ENCODE measurements at regions of chr10 and their contacts with region 1.

Region 1: GRCh38 chr10:90912174-90912573 is 8.7 kb downstream of the ANKRD1 start:
- H3K4me3 ChIP-seq: no peak overlapping the region
- H3K27ac ChIP-seq: no peak overlapping the region
- H3K4me1 ChIP-seq: no peaks in the 10 kb centered on the region
- CTCF ChIP-seq: no peak

Region 2: GRCh38 chr10:90930070-90930837 is 18.1 kb after region 1 on chr10:
- CTCF ChIA-PET with region 1: interaction called, 4 read pairs
- POLR2A ChIA-PET with region 1: interaction called, 10 read pairs
- H3K4me3 ChIP-seq: no peak overlapping the region
- H3K27ac ChIP-seq: no peak overlapping the region; the same call in 1 of the 2 replicates
- H3K4me1 ChIP-seq: 0 out of 2 replicates have a peak, but pooled peaks cover 3% of the 10 kb centered on the region
- CTCF ChIP-seq: no peak

Region 3: DNA sequence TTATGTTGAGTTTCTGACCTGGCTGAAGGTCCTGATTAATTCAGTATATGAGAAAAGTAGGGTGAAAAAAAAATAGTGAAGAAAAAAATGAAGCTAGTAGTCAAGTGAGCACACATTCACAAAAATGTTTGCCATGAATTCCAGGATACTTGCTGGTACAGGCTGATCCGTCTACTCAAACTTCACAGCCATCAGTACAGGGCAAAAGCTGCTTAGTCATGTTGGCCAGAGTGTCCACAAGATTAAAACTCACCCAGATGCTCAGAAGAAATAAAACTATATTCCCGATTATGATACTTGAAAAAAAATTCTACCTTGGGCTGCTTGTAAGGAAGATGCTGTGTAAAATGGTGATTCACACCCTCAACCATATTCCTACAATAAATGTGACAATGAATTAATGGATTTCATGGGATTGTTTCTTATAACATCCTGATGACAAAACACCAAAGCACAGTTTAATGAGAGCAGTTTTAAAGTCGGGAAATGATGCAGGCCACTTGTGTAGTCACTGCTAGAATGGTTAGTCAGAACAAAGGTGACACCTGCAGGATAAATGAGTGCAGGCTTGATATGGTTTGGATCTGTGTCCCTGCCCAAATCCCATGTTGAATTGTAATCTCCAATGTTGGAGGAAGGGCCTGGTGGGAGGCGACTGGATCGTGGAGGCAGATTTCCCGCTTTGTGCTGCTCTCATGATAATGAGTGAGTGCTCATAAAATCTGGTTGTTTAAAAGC is 57.9 kb after region 1 on chr10:
- CTCF ChIA-PET with region 1: interaction called, 38 read pairs
- POLR2A ChIA-PET with region 1: interaction called, 17 read pairs
- H3K4me3 ChIP-seq: no peak overlapping the region
- H3K27ac ChIP-seq: no peak overlapping the region
- H3K4me1 ChIP-seq: peaks cover 8% of the 10 kb centered on the region; the same call in 1 of the 2 replicates
- CTCF ChIP-seq: no peak

Region 4: DNA sequence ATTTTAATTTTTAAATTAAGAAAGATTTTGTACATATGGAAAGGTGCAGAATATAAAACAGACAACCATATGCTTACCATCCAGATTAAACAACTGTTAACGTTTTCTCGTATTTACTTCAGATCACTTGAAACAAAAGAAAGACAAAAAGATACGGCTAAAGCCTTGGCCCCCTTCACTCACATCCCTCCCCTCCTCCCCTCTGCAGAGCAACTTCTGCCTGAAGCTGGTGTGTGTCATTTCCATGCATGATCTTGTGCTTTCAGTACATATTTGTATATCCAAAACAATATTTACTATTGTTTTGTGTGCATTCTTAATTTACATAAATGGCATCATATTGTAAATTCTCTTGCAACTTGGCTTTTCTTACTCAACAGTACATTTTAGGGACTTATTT is 77.2 kb after region 1 on chr10:
- CTCF ChIA-PET with region 1: no interaction called
- POLR2A ChIA-PET with region 1: no interaction called
- H3K4me3 ChIP-seq: no peak overlapping the region
- H3K27ac ChIP-seq: no peak overlapping the region
- H3K4me1 ChIP-seq: 0 out of 2 replicates have a peak, but pooled peaks cover 2% of the 10 kb centered on the region
- CTCF ChIP-seq: no peak

Region 5: GRCh38 chr10:91000984-91001383 is 88.8 kb after region 1 on chr10:
- CTCF ChIA-PET with region 1: interaction called, 23 read pairs
- POLR2A ChIA-PET with region 1: no interaction called
- H3K4me3 ChIP-seq: no peak overlapping the region
- H3K27ac ChIP-seq: no peak overlapping the region
- H3K4me1 ChIP-seq: no peaks in the 10 kb centered on the region
- CTCF ChIP-seq: no peak